Activated B cell treated with CpG ODN at 0.5 μM for 24 hours (primary cell): ENCODE measurements at regions of chr3 and their contacts with region 1.

Region 1: GRCh38 chr3:71681224-71681668 is 44.0 kb downstream of the EIF4E3 start:
- DNase-seq: no peak
- ATAC-seq: no peak
- H3K4me3 Mint-ChIP-seq: no peak overlapping the region
- H3K27ac Mint-ChIP-seq: no peak overlapping the region
- H3K4me1 Mint-ChIP-seq: no peaks in the 10 kb centered on the region
- H3K27me3 Mint-ChIP-seq: no peaks in the 10 kb centered on the region
- CTCF ChIP-seq: no peak

Region 2: GRCh38 chr3:70064194-70064779 is 1617.0 kb before region 1 on chr3:
- CTCF ChIA-PET with region 1: interaction called, 3 read pairs
- POLR2A ChIA-PET with region 1: no interaction called
- intact Hi-C with region 1: loop called (anchors 1 kb)
- DNase-seq: no peak
- ATAC-seq: no peak
- H3K4me3 Mint-ChIP-seq: no peak overlapping the region
- H3K27ac Mint-ChIP-seq: no peak overlapping the region
- H3K4me1 Mint-ChIP-seq: no peaks in the 10 kb centered on the region
- H3K27me3 Mint-ChIP-seq: peaks cover 2% of the 10 kb centered on the region
- CTCF ChIP-seq: peak; percentile 79